ENCODE measurements at regions of chr2 and their contacts with region 1.

Region 1: DNA sequence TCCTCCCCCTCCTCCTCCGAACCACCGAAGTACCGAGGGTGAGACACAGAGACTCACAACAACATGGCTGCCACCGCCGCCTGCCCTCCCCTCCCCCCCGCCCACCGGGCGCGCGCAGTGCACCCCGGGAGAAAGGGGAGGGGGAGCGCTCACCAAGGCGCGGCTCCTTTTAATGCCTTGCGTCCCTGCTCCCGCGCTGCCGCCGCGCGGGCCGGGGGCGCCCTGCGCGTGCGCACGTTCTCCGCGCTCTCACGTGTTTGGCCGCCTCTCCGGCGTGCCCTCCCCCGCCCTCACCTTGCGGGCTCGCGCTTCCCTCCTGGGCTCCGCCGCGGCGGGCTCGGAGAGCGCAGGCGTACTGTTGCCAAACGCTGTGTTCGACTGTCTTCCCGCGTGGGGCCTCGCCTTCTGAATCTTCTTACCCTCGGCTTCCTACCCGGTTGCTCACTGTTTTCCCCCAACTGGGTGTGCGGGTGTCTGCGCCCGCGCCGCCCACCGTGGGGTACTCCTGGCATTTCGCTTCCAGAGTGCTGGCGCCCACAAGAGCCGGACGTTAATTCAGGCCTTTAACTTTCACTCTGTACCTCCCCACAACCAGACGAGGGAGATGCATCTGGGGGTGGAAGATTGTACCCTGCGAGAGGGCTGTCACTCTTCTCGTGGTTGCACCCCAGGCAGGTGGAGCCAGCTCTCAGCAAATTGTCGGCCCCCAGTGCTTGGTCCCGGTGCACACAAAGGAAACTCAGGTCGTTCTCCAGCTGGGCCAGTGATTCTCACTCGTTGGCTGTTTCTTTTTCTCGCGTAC is at the start of gene PUM2:
- DNase-seq: peak; percentile 97
- H3K4me3 Mint-ChIP-seq: peak within 1 kb of the TSS; percentile 92
- H3K27ac Mint-ChIP-seq: peak within 1 kb of the TSS; percentile 92
- H3K4me1 Mint-ChIP-seq: peaks cover 35% of the 10 kb centered on the region
- H3K27me3 Mint-ChIP-seq: no peaks in the 10 kb centered on the region
- total RNA-seq, gene PUM2: 125 and 131 TPM in 2 replicates

Region 2: GRCh38 chr2:18560031-18560796 is 1790.7 kb before region 1 on chr2 and contains the start of gene RDH14:
- intact Hi-C with region 1: loop called (anchors 5 kb)
- DNase-seq: peak; percentile 87
- H3K4me3 Mint-ChIP-seq: peak within 1 kb of the TSS; percentile 91
- H3K27ac Mint-ChIP-seq: peak within 1 kb of the TSS; percentile 91
- H3K4me1 Mint-ChIP-seq: peaks cover 38% of the 10 kb centered on the region
- H3K27me3 Mint-ChIP-seq: no peaks in the 10 kb centered on the region
- total RNA-seq, gene RDH14: 12.4 and 14.5 TPM in 2 replicates

Region 3: DNA sequence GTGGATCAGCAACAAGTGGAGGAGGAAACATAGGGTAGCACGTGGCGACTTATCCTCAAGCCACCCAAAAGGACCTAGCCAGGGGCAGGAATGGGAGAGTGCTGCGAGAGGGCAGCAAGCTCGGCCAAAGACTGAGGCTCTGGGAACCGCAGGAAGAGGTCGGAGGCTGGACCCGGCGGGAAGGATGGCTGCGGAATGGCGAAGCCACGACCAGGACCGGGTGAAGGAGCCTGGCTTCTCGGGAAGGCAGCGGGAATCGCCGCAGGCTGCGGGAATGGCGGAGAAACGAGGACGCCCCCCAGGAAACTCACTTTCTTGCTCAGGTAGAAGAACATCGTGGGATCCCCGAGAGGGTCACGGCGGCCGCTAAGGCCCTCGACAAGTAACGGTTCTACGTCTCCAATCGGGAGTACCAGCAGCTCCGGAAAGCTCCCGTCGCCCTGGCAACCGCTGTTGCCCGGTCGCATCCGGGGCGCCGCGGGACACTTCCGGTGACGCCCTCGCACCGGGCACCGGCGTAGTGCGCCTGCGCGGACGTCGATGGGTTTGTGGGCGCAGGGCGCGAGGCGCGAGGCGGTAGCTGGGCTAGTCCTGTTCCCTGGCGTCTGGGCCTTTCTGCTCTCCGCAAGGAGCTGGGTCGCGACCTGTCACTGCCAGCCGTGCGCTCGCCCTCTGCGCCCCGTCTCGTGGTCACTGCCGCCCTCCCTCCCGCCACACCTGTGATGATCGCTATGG is 361.1 kb before region 1 on chr2 and contains the start of gene WDR35:
- intact Hi-C with region 1: loop called (anchors 5 kb)
- DNase-seq: peak; percentile 92
- H3K4me3 Mint-ChIP-seq: peak within 1 kb of the TSS; percentile 90
- H3K27ac Mint-ChIP-seq: peak within 1 kb of the TSS; percentile 69
- H3K4me1 Mint-ChIP-seq: peaks cover 19% of the 10 kb centered on the region
- H3K27me3 Mint-ChIP-seq: peaks cover 30% of the 10 kb centered on the region
- total RNA-seq, gene WDR35: 7.7 and 7.8 TPM in 2 replicates

Region 4: GRCh38 chr2:20313659-20314058 is 37.3 kb before region 1 on chr2:
- intact Hi-C with region 1: loop called (anchors 5 kb)
- DNase-seq: no peak
- H3K4me3 Mint-ChIP-seq: no peak overlapping the region
- H3K27ac Mint-ChIP-seq: no peak overlapping the region
- H3K4me1 Mint-ChIP-seq: peaks cover 24% of the 10 kb centered on the region
- H3K27me3 Mint-ChIP-seq: no peaks in the 10 kb centered on the region

Region 5: DNA sequence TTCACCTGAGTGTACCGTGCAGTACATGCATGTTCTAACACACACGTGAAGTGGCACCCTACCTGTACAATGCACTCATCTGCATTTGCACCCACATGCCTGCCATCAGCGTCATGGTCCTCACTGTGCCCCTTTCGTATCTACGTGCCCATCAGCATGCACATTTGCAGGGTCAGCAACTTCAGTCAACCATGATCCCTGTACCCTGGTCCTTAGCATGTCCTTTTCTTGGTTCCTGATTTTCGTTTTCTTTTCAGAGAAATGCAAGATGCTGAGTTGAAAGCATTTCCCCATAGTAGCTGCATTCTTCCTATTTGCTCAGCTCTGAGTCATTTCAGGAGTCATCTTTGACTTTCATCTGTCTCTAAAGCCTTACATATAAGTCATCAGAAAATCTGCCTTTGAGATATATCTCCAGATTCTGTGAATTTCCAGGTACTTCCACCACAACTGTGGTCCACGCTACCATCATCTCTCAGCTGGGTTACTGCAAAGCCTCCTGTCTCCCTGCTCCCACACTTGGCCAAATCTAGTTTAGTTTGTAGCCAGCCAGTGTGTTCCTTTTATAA is 14.4 kb after region 1 on chr2:
- intact Hi-C with region 1: loop called (anchors 1 kb)
- DNase-seq: peak; percentile 67
- H3K4me3 Mint-ChIP-seq: peak overlapping the region; percentile 2
- H3K27ac Mint-ChIP-seq: peak overlapping the region; percentile 77
- H3K4me1 Mint-ChIP-seq: peaks cover 37% of the 10 kb centered on the region
- H3K27me3 Mint-ChIP-seq: no peaks in the 10 kb centered on the region

Region 6: DNA sequence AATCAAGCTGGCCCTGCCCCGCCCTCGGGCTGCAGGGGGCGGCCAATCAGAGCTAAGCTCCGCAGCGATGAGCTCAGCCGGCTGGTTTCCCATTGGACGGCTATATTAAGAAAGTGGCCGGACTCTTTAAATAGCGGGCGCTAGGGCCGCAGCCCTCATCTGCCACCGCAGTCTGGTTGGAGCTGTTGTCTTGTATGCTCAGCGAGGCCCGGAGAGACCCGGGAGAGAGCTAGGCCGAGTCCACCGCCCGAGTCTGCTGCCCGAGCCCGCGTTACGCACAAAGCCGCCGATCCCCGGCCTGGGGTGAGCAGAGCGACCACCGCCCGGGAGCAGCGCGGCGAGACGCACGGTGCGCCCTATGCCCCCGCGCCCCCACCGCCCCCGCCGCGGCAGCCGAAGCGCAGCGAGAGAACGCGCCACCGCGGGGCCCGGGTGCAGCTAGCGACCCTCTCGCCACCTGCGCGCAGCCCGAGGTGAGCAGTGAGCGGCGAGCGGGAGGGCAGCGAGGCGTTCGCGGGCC is 96.0 kb after region 1 on chr2 and contains the start of gene RHOB:
- intact Hi-C with region 1: loop called (anchors 1 kb)
- DNase-seq: peak; percentile 89
- H3K4me3 Mint-ChIP-seq: peak within 1 kb of the TSS; percentile 81
- H3K27ac Mint-ChIP-seq: peak within 1 kb of the TSS; percentile 61
- H3K4me1 Mint-ChIP-seq: peaks cover 12% of the 10 kb centered on the region
- H3K27me3 Mint-ChIP-seq: peaks cover 64% of the 10 kb centered on the region
- total RNA-seq, gene RHOB: 27.6 and 29.6 TPM in 2 replicates

Region 7: GRCh38 chr2:20822535-20823490 is 471.9 kb after region 1 on chr2 and contains the start of gene LDAH:
- intact Hi-C with region 1: loop called (anchors 5 kb)
- DNase-seq: peak; percentile 74
- H3K4me3 Mint-ChIP-seq: peak within 1 kb of the TSS; percentile 98
- H3K27ac Mint-ChIP-seq: peak within 1 kb of the TSS; percentile 98
- H3K4me1 Mint-ChIP-seq: peaks cover 28% of the 10 kb centered on the region
- H3K27me3 Mint-ChIP-seq: no peaks in the 10 kb centered on the region
- total RNA-seq, gene LDAH: 34.6 and 34.7 TPM in 2 replicates